ENCODE measurements at regions of chr3 and their contacts with region 1.

Region 1: GRCh38 chr3:112293368-112294321 is at the start of gene SLC9C1:
- DNase-seq: peak; percentile 73
- H3K4me3 ChIP-seq: peak within 1 kb of the TSS; percentile 41
- H3K27ac ChIP-seq: peak within 1 kb of the TSS; percentile 83
- H3K4me1 ChIP-seq: no peaks in the 10 kb centered on the region
- H3K27me3 ChIP-seq: no peaks in the 10 kb centered on the region
- CTCF ChIP-seq: peak; percentile 26
- total RNA-seq, gene SLC9C1: 0.13 to 0.15 TPM

Region 2: GRCh38 chr3:112136959-112137693 is 156.5 kb before region 1 on chr3:
- intact Hi-C with region 1: loop called (anchors 10 kb)
- DNase-seq: no peak
- H3K4me3 ChIP-seq: no peak overlapping the region
- H3K27ac ChIP-seq: no peak overlapping the region
- H3K4me1 ChIP-seq: no peaks in the 10 kb centered on the region
- H3K27me3 ChIP-seq: no peaks in the 10 kb centered on the region
- CTCF ChIP-seq: peak; percentile 28